ENCODE measurements at regions of chr13 and their contacts with region 1.

Region 1: GRCh38 chr13:26221721-26222519 is at the start of gene RNF6:
- DNase-seq: peak; percentile 93
- ATAC-seq: peak; percentile 98
- H3K4me3 Mint-ChIP-seq: peak within 1 kb of the TSS; percentile 97
- H3K27ac Mint-ChIP-seq: peak within 1 kb of the TSS; percentile 100
- H3K4me1 Mint-ChIP-seq: peaks cover 36% of the 10 kb centered on the region
- H3K27me3 Mint-ChIP-seq: peaks cover 8% of the 10 kb centered on the region
- total RNA-seq, gene RNF6: 34.2 to 35.7 TPM

Region 2: GRCh38 chr13:26253787-26254582 is 32.1 kb after region 1 on chr13 and contains the start of gene CDK8:
- CTCF ChIA-PET with region 1: interaction called, 3 read pairs
- POLR2A ChIA-PET with region 1: interaction called, 14 read pairs
- DNase-seq: peak; percentile 90
- ATAC-seq: peak; percentile 89
- H3K4me3 Mint-ChIP-seq: peak within 1 kb of the TSS; percentile 81
- H3K27ac Mint-ChIP-seq: peak within 1 kb of the TSS; percentile 84
- H3K4me1 Mint-ChIP-seq: peaks cover 26% of the 10 kb centered on the region
- H3K27me3 Mint-ChIP-seq: no peaks in the 10 kb centered on the region
- total RNA-seq, gene CDK8: 14.7 to 15.7 TPM

Region 3: DNA sequence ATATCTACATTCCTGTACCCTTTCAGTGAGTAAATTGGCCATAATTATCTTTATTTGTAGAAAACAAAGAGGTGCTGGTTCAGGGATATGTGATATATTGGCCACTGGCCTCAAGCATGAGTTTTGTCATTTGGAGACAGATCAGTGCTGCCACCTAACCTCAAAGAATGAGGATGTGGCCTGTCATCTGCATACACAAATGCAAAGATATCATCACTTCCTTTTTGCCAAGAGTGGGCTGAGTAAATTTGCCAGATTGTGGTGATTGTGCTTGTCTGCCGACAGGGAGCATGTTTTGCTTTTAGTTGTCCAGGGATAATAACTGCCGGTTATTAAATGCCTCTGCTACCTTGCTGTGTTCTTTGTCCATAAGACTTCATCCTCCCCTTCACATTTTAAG is 379.7 kb after region 1 on chr13:
- CTCF ChIA-PET with region 1: no interaction called
- POLR2A ChIA-PET with region 1: no interaction called
- DNase-seq: peak; percentile 66
- ATAC-seq: peak; percentile 76
- H3K4me3 Mint-ChIP-seq: no peak overlapping the region
- H3K27ac Mint-ChIP-seq: no peak overlapping the region
- H3K4me1 Mint-ChIP-seq: peaks cover 15% of the 10 kb centered on the region
- H3K27me3 Mint-ChIP-seq: peaks cover 22% of the 10 kb centered on the region